Activated naive CD4-positive, alpha-beta T cell treated with anti-CD3 and anti-CD28 coated beads for 36 hours (primary cell): ENCODE measurements at regions of chr9 and their contacts with region 1.

Region 1: DNA sequence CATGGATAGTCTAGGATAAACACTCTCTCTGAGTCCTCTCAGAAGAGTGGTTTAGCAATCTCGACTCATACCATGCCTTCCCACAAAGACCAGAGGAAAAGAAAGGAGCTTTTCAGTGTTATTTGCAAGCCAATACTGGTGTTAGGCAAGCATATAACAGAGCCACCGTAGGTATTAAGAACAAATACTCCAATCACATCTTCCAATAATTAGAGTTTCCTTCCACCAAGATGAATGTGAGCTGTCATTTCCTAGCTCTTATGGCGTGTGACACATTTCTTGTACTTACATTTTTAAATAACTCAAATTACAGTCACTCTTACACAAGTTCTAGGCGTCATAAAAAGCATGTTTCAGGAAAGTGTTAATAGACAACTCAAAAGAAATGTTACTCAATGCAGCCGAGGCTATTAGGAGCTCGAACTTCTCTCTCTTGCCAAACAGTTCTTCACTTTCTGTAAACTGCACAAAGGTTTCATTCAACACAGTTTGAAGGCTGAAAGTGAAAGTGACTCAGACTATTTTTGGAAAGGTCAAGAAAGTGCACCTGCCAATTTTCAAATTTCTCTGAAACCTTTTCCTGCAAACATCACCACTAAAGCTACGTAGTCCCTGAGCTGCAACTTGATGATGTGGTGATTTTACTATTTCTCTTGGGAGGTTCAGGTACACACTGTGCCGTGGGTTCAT is 153.8 kb downstream of the AUH start:
- DNase-seq: peak; percentile 61
- H3K4me3 Mint-ChIP-seq: peak overlapping the region; percentile 7
- H3K27ac Mint-ChIP-seq: peak overlapping the region; percentile 98
- H3K4me1 Mint-ChIP-seq: peaks cover 68% of the 10 kb centered on the region
- H3K27me3 Mint-ChIP-seq: no peaks in the 10 kb centered on the region

Region 2: DNA sequence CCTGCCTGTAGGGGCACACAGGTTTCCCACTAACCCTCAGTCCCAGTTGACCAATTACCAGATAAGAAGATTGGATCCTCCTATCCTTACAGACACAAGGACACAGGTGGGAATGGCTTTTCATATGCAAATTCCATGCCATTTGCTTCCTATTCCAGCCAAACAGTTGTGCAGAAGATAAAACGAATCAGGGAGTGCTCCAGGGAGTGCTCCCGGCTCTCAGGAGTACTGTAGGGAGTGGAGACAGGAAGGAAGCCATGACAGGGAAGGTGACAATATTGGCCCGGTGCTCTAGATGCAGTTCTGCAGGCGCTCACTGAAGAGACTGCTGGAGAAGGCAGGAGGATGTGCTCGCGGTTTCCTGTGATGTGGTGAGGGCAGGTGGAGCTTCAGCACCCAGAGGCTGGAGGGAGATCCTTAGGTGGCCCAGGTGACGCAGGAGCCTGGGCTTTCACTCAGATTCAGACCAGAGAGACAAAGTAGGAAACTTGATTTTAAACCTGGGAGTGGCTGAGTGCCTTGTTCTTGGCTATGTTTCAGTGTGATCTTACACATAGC is 106.2 kb before region 1 on chr9:
- CTCF ChIA-PET with region 1: interaction called, 3 read pairs
- intact Hi-C with region 1: loop called (anchors 1 kb)
- DNase-seq: peak; percentile 97
- H3K4me3 Mint-ChIP-seq: peak overlapping the region; percentile 59
- H3K27ac Mint-ChIP-seq: peak overlapping the region; percentile 14
- H3K4me1 Mint-ChIP-seq: peaks cover 41% of the 10 kb centered on the region
- H3K27me3 Mint-ChIP-seq: peaks cover 3% of the 10 kb centered on the region

Region 3: DNA sequence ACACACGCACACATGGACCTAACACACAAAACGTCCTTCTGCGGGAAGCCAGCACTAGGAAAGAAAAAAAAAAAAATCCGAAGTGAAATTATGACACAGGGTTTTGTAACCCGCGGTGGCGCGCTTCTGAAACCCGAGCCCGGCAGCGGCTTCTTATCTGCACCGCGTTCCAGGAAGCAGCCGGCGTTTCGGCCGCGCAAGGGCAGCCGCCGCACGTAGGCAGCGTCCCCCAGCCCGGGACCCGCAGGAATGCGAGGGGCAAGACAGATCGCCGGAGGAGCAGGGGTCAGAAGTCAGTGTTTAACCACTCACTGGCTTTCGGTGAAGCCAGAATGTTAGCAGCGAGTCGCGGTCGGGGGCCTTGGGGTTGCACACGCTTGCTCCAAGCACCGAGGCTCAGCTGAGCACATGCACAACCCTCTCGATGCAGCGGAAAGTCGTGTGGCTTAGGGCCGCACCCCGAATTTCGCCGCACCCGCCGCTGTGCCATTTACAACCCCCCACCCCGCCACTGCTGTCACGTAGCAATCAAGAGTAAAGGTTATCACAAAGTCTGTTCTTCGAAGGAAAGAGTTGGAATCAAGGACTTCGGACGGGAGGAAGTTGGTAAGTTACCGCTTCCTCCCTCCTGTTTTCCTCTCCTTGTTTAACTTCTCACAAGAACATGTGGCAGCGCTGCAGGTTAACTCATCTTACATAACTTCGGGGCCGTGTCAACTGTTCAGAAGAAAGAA is 14.0 kb before region 1 on chr9:
- CTCF ChIA-PET with region 1: interaction called, 9 read pairs
- intact Hi-C with region 1: loop called (anchors 1 kb)
- DNase-seq: peak; percentile 86
- H3K4me3 Mint-ChIP-seq: peak overlapping the region; percentile 72
- H3K27ac Mint-ChIP-seq: peak overlapping the region; percentile 97
- H3K4me1 Mint-ChIP-seq: peaks cover 45% of the 10 kb centered on the region
- H3K27me3 Mint-ChIP-seq: no peaks in the 10 kb centered on the region

Region 4: GRCh38 chr9:91285729-91286353 is 78.0 kb after region 1 on chr9:
- CTCF ChIA-PET with region 1: no interaction called
- intact Hi-C with region 1: loop called (anchors 1 kb)
- DNase-seq: no peak
- H3K4me3 Mint-ChIP-seq: no peak overlapping the region
- H3K27ac Mint-ChIP-seq: peak overlapping the region; percentile 61
- H3K4me1 Mint-ChIP-seq: peaks cover 14% of the 10 kb centered on the region
- H3K27me3 Mint-ChIP-seq: no peaks in the 10 kb centered on the region

Region 5: DNA sequence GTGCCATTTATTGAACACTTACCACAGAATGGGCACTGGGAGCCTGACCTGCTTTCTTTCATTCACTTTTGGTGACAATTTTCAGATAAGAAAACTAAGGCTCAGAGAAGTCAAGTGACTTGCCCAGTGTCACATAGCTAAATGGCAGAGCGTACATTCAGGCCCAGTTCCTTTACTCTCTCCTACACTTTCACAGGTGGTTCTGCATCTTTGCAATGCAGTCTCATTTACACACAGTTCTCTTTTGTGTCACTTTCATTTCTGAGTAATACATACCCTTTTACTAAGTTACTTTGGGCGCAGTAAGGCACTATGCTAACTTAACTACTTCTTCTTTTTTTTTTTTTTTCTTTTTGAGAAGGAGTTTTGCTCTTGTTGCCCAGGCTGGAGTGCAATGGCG is 207.4 kb after region 1 on chr9:
- CTCF ChIA-PET with region 1: interaction called, 3 read pairs
- intact Hi-C with region 1: loop called (anchors 2 kb)
- DNase-seq: peak; percentile 56
- H3K4me3 Mint-ChIP-seq: no peak overlapping the region
- H3K27ac Mint-ChIP-seq: peak overlapping the region; percentile 80
- H3K4me1 Mint-ChIP-seq: peaks cover 69% of the 10 kb centered on the region
- H3K27me3 Mint-ChIP-seq: peaks cover 2% of the 10 kb centered on the region